HEK293T (cell line): ENCODE measurements at regions of chr4 and their contacts with region 1.

Region 1: DNA sequence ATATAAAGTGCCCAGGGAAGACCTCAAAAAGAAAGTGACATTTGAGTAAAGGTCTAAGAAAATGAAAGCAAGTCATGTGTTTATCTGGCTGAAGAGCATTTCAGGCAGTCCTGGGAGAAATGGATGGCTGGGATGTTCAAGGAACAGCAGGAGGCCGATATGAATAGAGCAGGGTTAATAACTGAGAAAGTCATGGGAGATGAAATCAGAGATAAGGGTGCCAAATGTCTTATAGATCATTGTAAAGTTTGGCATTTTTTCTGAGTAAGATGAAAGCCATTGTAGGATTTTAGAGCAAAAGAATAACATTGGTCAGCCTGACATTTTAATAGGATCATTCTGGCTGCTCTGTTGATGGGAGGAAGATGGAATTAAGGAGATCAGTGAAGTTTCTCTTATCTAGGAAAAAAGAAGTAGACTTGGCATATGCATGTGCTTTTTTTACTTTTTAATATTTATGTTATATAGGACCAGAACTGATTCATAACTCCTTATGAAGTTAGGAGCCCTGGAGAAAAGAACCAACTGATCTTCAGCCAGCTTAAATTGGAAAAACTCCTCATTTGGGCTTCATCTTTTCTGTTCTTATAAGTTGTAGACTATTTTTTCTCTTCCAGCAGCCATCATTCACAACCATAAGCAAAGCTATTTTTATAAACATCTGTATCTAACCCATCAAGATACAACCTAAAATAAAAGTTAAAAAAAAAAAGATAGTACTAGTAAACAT is 18.6 kb downstream of the AIMP1 start:
- DNase-seq: no peak

Region 2: DNA sequence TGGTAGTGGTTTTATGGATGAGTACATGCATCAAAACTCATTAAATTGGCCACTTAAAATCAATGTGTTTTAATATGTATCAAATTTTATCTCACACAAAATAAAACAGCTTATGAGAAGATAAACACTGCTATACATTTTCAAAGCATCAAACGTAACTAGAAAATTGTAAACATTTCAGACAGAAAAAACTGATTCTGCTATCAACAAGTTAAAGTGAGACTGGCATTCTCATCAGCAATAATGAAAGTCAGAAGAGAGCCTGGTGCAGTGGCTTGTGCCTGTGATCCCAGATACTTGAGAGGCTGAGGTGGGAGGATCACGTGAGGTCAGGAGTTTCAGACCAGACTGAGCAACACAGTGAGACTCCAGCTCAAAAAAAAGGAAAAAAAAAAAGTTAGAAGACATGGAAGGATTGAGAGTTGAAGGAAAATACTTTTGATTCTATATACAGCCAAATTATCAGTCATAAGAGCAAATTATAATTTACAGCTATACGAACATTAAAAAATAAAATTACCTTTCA is 21.8 kb before region 1 on chr4:
- CTCF ChIA-PET with region 1: interaction called, 10 read pairs
- POLR2A ChIA-PET with region 1: no interaction called
- DNase-seq: no peak